Activated CD4-positive, alpha-beta T cell treated with anti-CD3 and anti-CD28 coated beads, Interleukin-2, amount 10 ng/mL, durations not matched to agents 7 days and 5 days (primary cell): ENCODE measurements at regions of chr1 and their contacts with region 1.

Region 1: DNA sequence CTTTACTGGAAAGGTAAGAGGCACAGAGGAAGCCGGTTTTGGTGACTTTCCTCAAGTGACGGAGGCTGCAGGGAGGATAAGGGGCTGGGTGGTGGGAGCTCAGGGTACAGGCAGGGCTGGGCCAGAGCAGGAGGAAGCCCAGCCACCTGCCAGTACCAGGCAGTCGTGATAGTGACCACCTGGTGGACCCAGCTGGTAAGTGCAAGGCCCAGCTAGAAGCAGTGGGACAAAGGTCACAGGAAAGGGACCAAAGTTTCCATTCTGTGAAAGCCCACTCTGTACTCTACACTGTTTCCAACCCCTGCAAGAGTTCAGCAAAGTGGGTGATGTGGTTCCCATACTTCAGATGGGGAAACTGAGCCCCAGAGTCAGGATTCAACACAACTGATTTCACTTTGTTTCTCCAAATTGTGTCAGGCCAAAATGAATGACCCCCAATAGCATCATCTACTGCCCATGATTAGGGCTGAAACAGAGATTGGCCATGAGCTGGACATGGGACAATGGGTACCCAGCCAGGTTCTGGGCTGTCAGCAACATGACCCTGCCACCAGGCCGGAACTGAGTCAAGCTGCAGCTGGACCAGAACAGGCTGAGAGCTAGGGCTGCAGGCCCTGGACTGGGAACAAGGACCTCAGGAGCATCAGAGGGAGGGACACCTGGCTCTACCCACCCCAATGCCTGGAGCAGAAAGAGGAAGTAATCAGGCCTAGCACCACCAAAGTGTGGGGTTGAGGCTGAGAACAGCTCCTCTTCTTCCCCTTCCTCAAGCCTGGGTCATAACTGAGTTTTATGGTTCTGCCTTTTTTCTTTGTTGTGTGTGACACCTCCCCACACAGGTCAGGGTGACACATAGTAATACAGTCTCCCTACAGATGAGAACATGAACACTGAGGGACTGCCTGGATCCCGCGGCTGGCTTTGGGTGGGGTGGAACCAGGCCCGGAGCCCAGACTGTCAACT is 50.2 kb downstream of the KCNN3 start:
- DNase-seq: peak; percentile 16
- H3K4me3 Mint-ChIP-seq: no peak overlapping the region
- H3K27ac Mint-ChIP-seq: no peak overlapping the region
- H3K4me1 Mint-ChIP-seq: no peaks in the 10 kb centered on the region
- H3K27me3 Mint-ChIP-seq: peaks cover 2% of the 10 kb centered on the region

Region 2: GRCh38 chr1:154565876-154566275 is 254.0 kb before region 1 on chr1:
- CTCF ChIA-PET with region 1: no interaction called
- POLR2A ChIA-PET with region 1: no interaction called
- DNase-seq: no peak
- H3K4me3 Mint-ChIP-seq: no peak overlapping the region
- H3K27ac Mint-ChIP-seq: no peak overlapping the region
- H3K4me1 Mint-ChIP-seq: peaks cover 8% of the 10 kb centered on the region
- H3K27me3 Mint-ChIP-seq: peaks cover 21% of the 10 kb centered on the region

Region 3: DNA sequence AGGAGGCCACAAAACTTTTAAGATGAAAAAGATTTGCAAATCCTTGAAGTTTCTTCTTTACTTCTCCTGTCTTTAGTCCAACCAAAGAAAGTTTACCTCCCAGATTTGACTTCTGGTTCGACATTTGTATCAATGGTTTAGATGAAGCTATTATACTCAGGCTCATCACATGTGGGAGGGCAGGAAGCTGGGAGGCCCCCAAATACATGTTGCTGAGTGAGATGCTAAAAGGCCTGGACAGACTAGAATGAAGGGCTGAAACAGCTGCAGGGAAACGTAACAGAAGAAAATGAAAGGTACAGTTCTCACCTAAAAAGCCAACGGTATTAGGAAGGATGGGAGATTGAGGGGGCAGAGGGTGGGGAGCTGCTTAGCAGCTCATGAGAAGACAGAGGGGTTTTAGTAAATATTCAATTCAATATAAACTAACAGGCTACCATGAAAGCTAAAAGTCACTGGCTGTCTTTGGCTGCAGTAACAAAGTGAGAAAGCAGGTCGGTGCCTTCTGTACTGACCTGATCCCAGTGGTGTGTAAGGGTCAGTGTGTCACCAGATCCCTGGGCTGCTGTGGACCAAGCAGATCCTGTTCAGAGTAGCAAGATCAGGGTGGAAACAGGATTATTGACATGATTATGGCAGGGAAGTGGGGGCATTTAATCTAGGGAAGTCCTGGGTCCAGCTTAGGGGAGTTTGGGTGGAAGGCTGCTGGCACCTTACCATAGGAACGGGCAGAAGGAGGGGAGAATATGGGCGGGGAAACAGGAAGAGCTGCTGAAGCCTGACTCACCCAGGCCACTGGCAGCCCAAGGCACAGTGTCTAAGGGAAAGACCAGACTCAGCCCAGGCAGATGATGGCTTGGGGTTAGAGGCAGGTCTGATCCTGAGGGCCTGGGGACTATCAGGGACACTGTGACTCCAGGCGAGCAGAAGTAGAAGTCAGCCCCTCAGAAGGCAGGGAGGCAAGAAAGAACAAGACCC is 10.2 kb before region 1 on chr1:
- CTCF ChIA-PET with region 1: interaction called, 11 read pairs
- POLR2A ChIA-PET with region 1: no interaction called
- DNase-seq: no peak
- H3K4me3 Mint-ChIP-seq: no peak overlapping the region
- H3K27ac Mint-ChIP-seq: peak overlapping the region; percentile 7
- H3K4me1 Mint-ChIP-seq: peaks cover 13% of the 10 kb centered on the region
- H3K27me3 Mint-ChIP-seq: peaks cover 20% of the 10 kb centered on the region

Region 4: DNA sequence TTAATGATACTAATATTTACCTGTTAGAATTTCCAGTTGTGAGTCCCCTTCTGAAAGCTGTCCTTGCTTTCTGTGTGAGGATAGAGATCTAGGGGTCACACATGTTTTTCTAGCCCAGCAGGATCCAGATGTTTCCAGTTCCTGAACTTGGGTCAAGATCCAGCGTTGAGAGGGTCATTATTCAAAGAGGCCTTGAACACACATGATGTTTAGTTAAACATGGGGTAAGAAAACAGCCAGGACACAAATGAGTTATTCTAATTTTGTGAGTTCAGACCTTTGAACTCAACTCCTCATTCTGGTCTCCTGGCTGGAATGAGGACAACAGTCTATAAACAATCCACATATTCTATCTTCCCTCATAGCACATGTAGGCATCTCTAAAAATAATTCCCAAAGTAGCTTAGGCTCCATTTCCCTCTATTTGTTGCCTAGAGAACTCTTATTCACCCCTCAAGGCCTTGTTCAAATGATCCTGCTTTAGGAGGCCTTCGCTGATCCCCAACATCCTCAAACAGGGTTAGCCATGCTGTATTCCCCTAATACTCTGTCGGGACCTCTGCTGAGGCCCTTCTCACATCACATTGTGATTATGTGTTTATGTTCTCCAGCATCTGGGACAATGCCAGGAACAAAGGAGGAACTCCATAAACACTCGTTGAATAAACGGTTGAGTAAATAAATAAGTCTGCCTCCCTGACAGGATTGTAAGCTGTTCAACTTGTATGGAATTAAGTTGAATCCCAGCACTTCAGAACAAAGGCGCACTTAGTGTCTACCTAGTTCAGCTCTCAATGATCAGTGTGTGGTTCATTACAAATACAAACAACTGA is 65.2 kb after region 1 on chr1:
- CTCF ChIA-PET with region 1: no interaction called
- POLR2A ChIA-PET with region 1: no interaction called
- DNase-seq: no peak
- H3K4me3 Mint-ChIP-seq: no peak overlapping the region
- H3K27ac Mint-ChIP-seq: no peak overlapping the region
- H3K4me1 Mint-ChIP-seq: peaks cover 17% of the 10 kb centered on the region
- H3K27me3 Mint-ChIP-seq: peaks cover 4% of the 10 kb centered on the region